Common myeloid progenitor, CD34-positive (primary cell): ENCODE measurements at regions of chr3 and their contacts with region 1.

Region 1: GRCh38 chr3:12719984-12720898 is 38.8 kb downstream of the TMEM40 start:
- DNase-seq: peak; percentile 87 to 93 (median 91)
- H3K4me3 ChIP-seq: peak overlapping the region in 3 of 7 experiments; percentile 31 to 49 (median 42)
- H3K27ac ChIP-seq: peak overlapping the region in 1 of 2 experiments; percentile 54
- H3K4me1 ChIP-seq: peaks cover 0 to 8% (median 5%) of the 10 kb centered on the region in 4 experiments
- H3K27me3 ChIP-seq: no peaks in the 10 kb centered on the region

Region 2: DNA sequence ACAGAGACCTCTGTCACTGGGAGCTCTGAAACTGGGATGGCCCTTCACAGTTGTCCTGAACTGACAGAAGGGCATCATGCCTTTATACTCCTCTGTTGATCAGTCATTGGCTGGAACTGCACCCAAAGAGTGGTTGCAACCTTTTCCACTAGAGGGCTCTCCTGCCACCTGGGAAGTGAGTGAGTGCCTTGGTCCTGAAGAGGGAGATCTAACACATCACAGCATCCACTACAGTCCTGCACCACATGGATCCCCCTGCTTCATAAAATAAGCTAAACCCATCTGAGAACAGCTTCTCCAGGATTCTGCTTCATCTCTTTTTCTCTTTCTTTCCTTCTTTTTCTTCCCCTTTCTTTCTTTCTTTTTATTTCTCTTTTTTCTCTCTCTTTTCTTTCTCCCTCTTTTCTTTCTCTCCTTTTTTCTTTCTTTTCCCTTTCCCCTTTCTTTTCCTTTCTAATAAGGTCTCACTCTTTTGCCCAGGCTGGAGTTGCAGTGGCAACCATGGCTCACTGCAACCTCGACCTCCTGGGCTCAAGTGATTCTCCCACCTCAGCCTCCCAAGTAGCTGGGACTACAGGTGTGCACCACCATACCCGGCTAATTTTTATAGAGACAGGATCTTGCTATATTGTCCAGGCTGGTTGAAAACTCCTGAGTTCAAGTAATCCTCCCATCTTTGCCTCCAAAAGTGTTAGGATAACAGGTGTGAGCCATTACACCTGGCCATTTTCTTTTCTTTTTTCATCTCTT is 13.6 kb before region 1 on chr3:
- CTCF ChIA-PET with region 1: interaction called, 13 read pairs
- POLR2A ChIA-PET with region 1: interaction called, 4 read pairs
- DNase-seq: peak; percentile 82 to 88 (median 87)
- H3K4me3 ChIP-seq: no peak overlapping the region
- H3K27ac ChIP-seq: no peak overlapping the region
- H3K4me1 ChIP-seq: no peaks in the 10 kb centered on the region
- H3K27me3 ChIP-seq: peaks cover 0 to 3% (median 0%) of the 10 kb centered on the region in 5 experiments